Natural killer cell (primary cell): ENCODE measurements at regions of chr1 and their contacts with region 1.

Region 1: DNA sequence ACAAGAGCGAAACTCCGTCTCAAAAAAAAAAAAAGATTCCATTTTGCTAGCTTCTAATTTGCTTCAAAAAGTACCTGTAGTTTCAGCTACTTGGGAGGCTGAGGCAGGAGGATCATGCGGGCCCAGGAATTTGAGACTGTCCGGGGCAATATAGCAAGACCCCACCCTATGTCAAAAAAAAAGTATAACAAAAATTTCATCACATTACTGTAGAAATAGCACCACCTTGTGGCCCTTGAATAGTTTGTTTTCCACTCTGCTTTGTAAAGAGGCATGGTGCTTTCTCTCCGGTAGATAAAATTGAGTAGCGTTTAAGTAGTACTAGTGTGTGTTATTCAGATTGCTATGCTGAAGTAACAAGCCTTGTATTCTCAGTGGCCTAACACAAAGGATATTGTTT is 18.2 kb upstream of the MSTO1 start:
- DNase-seq: peak in 1 of 2 donors; percentile 80
- ATAC-seq: peak; percentile 68 to 83 (median 73)
- H3K4me3 ChIP-seq: no peak overlapping the region
- H3K4me3 Mint-ChIP-seq: no peak overlapping the region
- H3K27ac ChIP-seq: no peak overlapping the region
- H3K27ac Mint-ChIP-seq: no peak overlapping the region
- H3K4me1 ChIP-seq: no peaks in the 10 kb centered on the region
- H3K4me1 Mint-ChIP-seq: peaks cover 0 to 4% of the 10 kb centered on the region in 2 donors
- H3K27me3 ChIP-seq: no peaks in the 10 kb centered on the region
- H3K27me3 Mint-ChIP-seq: no peaks in the 10 kb centered on the region
- CTCF ChIP-seq: peak; percentile 68

Region 2: GRCh38 chr1:155172732-155173477 is 418.9 kb before region 1 on chr1 and contains the start of gene KRTCAP2:
- intact Hi-C with region 1: loop called (anchors 5 kb)
- DNase-seq: peak; percentile 89 to 98
- ATAC-seq: peak; percentile 82 to 93 (median 85)
- H3K4me3 ChIP-seq: peak within 1 kb of the TSS; percentile 68
- H3K4me3 Mint-ChIP-seq: peak within 1 kb of the TSS; percentile 95
- H3K27ac ChIP-seq: peak within 1 kb of the TSS; percentile 89
- H3K27ac Mint-ChIP-seq: peak within 1 kb of the TSS; percentile 95 to 99
- H3K4me1 ChIP-seq: peaks cover 34% of the 10 kb centered on the region
- H3K4me1 Mint-ChIP-seq: peaks cover 28 to 41% of the 10 kb centered on the region in 2 donors
- H3K27me3 ChIP-seq: no peaks in the 10 kb centered on the region
- H3K27me3 Mint-ChIP-seq: peaks cover 0 to 5% of the 10 kb centered on the region in 2 donors
- CTCF ChIP-seq: peak; percentile 94
- total RNA-seq, gene KRTCAP2: 95.3 to 113 (median 104) TPM

Region 3: DNA sequence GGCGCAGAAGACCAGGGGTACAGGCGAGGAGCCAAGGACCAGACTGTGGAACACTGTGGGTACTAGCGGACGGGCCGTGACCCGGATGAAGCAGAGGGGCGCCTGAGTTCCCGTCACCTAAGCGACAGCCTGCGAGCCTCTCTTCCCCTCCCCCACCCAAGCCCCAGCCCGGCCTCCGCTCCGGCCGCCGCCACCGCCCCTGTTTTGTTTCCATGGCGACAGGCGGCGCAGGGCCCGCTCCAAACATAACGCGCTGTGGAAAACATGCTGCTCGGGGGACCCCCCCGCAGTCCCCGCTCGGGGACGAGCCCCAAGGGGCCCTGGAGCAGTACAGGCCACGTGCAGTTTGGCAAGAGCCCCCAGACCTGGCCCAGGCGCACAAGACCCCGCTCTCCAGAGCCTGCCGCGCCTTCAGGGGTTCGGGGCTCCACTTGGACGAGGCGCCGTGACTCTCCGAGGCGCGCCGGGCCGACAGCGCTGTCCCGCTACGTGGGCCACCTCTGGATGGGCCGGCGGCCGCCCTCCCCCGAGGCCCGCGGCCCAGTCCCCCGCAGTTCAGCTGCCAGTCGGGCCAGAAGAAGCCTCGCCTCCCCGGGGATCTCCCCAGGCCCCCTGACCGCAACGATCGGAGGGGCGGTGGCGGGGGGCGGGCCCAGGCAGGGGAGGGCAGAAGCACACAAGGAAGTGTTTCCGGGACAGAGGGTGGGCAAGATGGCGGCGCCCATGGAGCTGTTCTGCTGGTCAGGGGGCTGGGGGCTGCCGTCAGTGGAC is 383.0 kb before region 1 on chr1 and contains the start of gene MTX1:
- intact Hi-C with region 1: loop called (anchors 5 kb)
- DNase-seq: peak; percentile 88 to 93
- ATAC-seq: peak; percentile 80 to 94 (median 86)
- H3K4me3 ChIP-seq: peak within 1 kb of the TSS; percentile 81
- H3K4me3 Mint-ChIP-seq: peak within 1 kb of the TSS; percentile 94
- H3K27ac ChIP-seq: peak within 1 kb of the TSS; percentile 100
- H3K27ac Mint-ChIP-seq: peak within 1 kb of the TSS; percentile 92 to 96
- H3K4me1 ChIP-seq: peaks cover 26% of the 10 kb centered on the region
- H3K4me1 Mint-ChIP-seq: peaks cover 25 to 33% of the 10 kb centered on the region in 2 donors
- H3K27me3 ChIP-seq: no peaks in the 10 kb centered on the region
- H3K27me3 Mint-ChIP-seq: no peaks in the 10 kb centered on the region
- CTCF ChIP-seq: no peak
- total RNA-seq, gene MTX1: 22.3 to 28.5 (median 27.9) TPM